ENCODE measurements at regions of chr2 and their contacts with region 1.

Region 1: GRCh38 chr2:134118279-134119116 is 135.4 kb upstream of the MGAT5 start:
- DNase-seq: peak; percentile 92
- H3K4me3 ChIP-seq: no peak overlapping the region
- H3K27ac ChIP-seq: peak overlapping the region; percentile 43
- H3K4me1 ChIP-seq: peaks cover 25% of the 10 kb centered on the region
- H3K27me3 ChIP-seq: peaks cover 0 to 3% of the 10 kb centered on the region in 2 experiments
- CTCF ChIP-seq: peak; percentile 64 to 69
- POLR2A ChIP-seq: no peak

Region 2: DNA sequence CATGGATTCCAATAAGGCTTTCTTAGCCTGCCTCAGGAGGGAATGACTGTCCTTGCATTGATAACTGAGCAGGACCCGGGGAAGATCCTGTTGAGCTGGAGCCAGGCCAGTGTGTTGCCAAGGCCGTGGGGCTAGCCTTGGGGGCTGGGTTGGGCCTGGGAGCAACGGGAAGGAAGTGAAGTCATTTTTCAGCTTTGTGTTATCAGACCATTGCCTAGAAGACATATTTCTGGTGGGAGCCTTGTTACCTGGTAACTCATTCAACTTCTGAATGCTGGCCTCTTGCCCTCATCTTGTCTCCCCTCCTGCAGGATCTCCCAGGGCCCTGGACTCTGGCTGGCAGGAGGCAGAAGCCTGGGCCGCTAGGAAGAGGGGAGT is 42.7 kb after region 1 on chr2:
- CTCF ChIA-PET with region 1: interaction called, 18 read pairs
- POLR2A ChIA-PET with region 1: interaction called, 3 read pairs
- dilution Hi-C with region 1: no loop called
- intact Hi-C with region 1: loop called (anchors 1 kb)
- DNase-seq: peak; percentile 77
- H3K4me3 ChIP-seq: no peak overlapping the region
- H3K27ac ChIP-seq: peak overlapping the region; percentile 90
- H3K4me1 ChIP-seq: peaks cover 19% of the 10 kb centered on the region
- H3K27me3 ChIP-seq: no peaks in the 10 kb centered on the region
- CTCF ChIP-seq: no peak
- POLR2A ChIP-seq: peak; percentile 39

Region 3: DNA sequence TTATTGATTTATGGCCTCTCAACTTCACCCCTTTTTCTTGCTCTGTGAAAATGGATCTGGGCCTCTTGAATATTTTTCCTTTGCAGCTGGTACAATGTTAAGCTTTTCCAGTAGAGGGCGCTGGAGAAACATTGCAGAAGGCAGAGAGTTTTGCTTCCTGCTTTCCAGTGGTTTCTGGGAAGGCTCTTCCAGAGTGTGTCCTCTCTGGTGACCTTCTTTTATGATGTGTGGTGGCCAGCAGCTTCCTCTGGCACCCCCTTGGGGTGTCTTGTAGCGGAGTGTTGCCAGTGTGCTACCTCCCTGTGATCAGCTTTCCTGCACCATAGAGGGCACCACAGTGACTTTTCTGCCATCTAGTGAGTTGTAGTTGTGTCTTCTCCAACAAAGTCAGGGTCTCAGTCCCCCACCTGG is 110.0 kb after region 1 on chr2:
- CTCF ChIA-PET with region 1: interaction called, 12 read pairs
- POLR2A ChIA-PET with region 1: no interaction called
- dilution Hi-C with region 1: no loop called
- intact Hi-C with region 1: no loop called
- DNase-seq: no peak
- H3K4me3 ChIP-seq: no peak overlapping the region
- H3K27ac ChIP-seq: no peak overlapping the region
- H3K4me1 ChIP-seq: no peaks in the 10 kb centered on the region
- H3K27me3 ChIP-seq: no peaks in the 10 kb centered on the region
- CTCF ChIP-seq: peak; percentile 35 to 40
- POLR2A ChIP-seq: no peak

Region 4: GRCh38 chr2:134307334-134307733 is 188.8 kb after region 1 on chr2:
- CTCF ChIA-PET with region 1: interaction called, 5 read pairs
- POLR2A ChIA-PET with region 1: no interaction called
- dilution Hi-C with region 1: no loop called
- intact Hi-C with region 1: loop called (anchors 1 kb)
- DNase-seq: peak; percentile 91
- H3K4me3 ChIP-seq: peak overlapping the region in 1 of 3 experiments; percentile 26
- H3K27ac ChIP-seq: peak overlapping the region; percentile 91
- H3K4me1 ChIP-seq: peaks cover 72% of the 10 kb centered on the region
- H3K27me3 ChIP-seq: no peaks in the 10 kb centered on the region
- CTCF ChIP-seq: no peak
- POLR2A ChIP-seq: peak; percentile 56

Region 5: DNA sequence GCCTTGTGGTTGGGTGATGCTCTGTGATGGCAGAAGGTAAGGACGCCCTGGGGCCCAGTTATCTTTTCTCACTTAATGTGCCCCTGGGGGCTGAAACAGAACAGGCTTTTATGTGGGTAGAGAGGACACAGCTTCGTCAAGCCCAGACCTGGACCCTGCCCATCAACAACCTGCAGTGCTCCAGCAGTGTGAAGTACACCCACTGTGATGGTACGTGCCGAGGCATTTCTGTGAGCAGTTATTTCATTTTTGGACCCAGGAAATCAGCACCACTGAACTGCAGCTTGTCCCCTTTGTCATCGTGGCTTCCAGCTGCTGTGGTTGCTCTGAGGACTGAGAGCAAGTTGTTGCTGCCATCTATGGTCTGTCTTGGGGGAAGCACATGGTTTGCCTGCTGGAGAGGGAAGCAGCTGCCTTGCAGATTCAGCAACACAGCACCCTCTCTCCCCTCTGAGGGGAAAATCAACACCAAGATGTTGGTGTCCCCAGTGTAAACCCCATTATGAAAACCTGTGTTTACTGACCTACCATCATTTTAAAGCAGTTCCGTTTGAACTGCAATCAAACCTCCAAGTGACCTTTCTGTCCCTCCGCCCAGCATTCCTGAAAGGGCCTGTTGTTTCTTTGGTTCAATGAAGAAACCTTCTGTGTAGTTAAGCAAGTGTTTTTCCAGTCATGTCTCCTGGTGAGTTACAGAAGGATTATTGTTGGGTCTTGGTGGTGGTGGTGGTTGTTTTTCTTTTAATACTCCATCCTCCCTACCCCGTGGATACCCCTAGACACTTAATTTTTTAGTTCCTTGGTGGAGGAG is 293.5 kb after region 1 on chr2:
- CTCF ChIA-PET with region 1: interaction called, 204 read pairs
- POLR2A ChIA-PET with region 1: interaction called, 4 read pairs
- dilution Hi-C with region 1: no loop called
- intact Hi-C with region 1: loop called (anchors 1 kb)
- DNase-seq: peak; percentile 73
- H3K4me3 ChIP-seq: no peak overlapping the region
- H3K27ac ChIP-seq: peak overlapping the region; percentile 56
- H3K4me1 ChIP-seq: peaks cover 45% of the 10 kb centered on the region
- H3K27me3 ChIP-seq: no peaks in the 10 kb centered on the region
- CTCF ChIP-seq: peak; percentile 61 to 77
- POLR2A ChIP-seq: no peak

Region 6: GRCh38 chr2:134918526-134919340 is 800.2 kb after region 1 on chr2 and contains the start of gene CCNT2:
- CTCF ChIA-PET with region 1: no interaction called
- POLR2A ChIA-PET with region 1: no interaction called
- dilution Hi-C with region 1: no loop called
- intact Hi-C with region 1: loop called (anchors 5 kb)
- DNase-seq: peak; percentile 99
- H3K4me3 ChIP-seq: peak within 1 kb of the TSS; percentile 93 to 100 (median 100)
- H3K27ac ChIP-seq: peak within 1 kb of the TSS; percentile 91
- H3K4me1 ChIP-seq: peaks cover 17% of the 10 kb centered on the region
- H3K27me3 ChIP-seq: no peaks in the 10 kb centered on the region
- CTCF ChIP-seq: no peak
- POLR2A ChIP-seq: peak; percentile 63
- total RNA-seq, gene CCNT2: 35.4 and 35.5 TPM in 2 replicates

Measured in endothelial cell of umbilical vein (primary cell).